ENCODE measurements at regions of chr7 and their contacts with region 1.

Region 1: GRCh38 chr7:65307651-65308299 is 65.9 kb upstream of the ZNF92 start:
- DNase-seq: peak; percentile 68
- H3K4me3 Mint-ChIP-seq: no peak overlapping the region
- H3K27ac Mint-ChIP-seq: no peak overlapping the region
- H3K4me1 Mint-ChIP-seq: no peaks in the 10 kb centered on the region
- H3K27me3 Mint-ChIP-seq: no peaks in the 10 kb centered on the region
- CTCF ChIP-seq: peak; percentile 73

Region 2: GRCh38 chr7:64902806-64903721 is 404.7 kb before region 1 on chr7 and contains the start of gene ZNF273:
- CTCF ChIA-PET with region 1: no interaction called
- POLR2A ChIA-PET with region 1: no interaction called
- intact Hi-C with region 1: no loop called
- DNase-seq: peak; percentile 92
- H3K4me3 Mint-ChIP-seq: peak within 1 kb of the TSS; percentile 95
- H3K27ac Mint-ChIP-seq: peak within 1 kb of the TSS; percentile 95
- H3K4me1 Mint-ChIP-seq: peaks cover 26% of the 10 kb centered on the region
- H3K27me3 Mint-ChIP-seq: no peaks in the 10 kb centered on the region
- CTCF ChIP-seq: no peak
- total RNA-seq, gene ZNF273: 2.2 and 2.5 TPM in 2 replicates

Region 3: GRCh38 chr7:65216459-65216858 is 91.3 kb before region 1 on chr7:
- CTCF ChIA-PET with region 1: interaction called, 41 read pairs
- POLR2A ChIA-PET with region 1: interaction called, 3 read pairs
- intact Hi-C with region 1: loop called (anchors 1 kb)
- DNase-seq: peak; percentile 75
- H3K4me3 Mint-ChIP-seq: peak overlapping the region; percentile 60
- H3K27ac Mint-ChIP-seq: no peak overlapping the region
- H3K4me1 Mint-ChIP-seq: no peaks in the 10 kb centered on the region
- H3K27me3 Mint-ChIP-seq: no peaks in the 10 kb centered on the region
- CTCF ChIP-seq: peak; percentile 83

Region 4: GRCh38 chr7:65276822-65277221 is 31.0 kb before region 1 on chr7:
- CTCF ChIA-PET with region 1: interaction called, 17 read pairs
- POLR2A ChIA-PET with region 1: no interaction called
- intact Hi-C with region 1: no loop called
- DNase-seq: no peak
- H3K4me3 Mint-ChIP-seq: no peak overlapping the region
- H3K27ac Mint-ChIP-seq: no peak overlapping the region
- H3K4me1 Mint-ChIP-seq: no peaks in the 10 kb centered on the region
- H3K27me3 Mint-ChIP-seq: no peaks in the 10 kb centered on the region
- CTCF ChIP-seq: no peak

Region 5: DNA sequence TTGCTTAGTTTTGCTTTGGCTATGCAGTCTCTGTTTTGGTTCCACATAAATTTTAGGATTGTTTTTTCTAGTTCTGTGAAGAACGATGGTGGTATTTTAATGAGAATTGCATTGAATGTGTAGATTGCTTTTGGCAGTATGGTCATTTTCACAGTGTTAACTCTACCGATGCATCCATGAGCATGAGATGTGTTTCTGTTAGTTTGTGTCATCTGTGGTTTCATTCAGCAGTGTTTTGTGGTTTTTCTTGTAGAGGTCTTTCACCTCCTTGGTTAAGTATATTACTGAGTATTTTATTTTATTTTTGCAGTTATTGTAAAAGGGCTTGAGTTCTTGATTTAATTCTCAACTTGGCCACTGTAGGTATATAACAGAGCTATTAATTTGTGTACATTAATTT is 12.4 kb before region 1 on chr7:
- CTCF ChIA-PET with region 1: interaction called, 57 read pairs
- POLR2A ChIA-PET with region 1: interaction called, 3 read pairs
- intact Hi-C with region 1: no loop called
- DNase-seq: no peak
- H3K4me3 Mint-ChIP-seq: no peak overlapping the region
- H3K27ac Mint-ChIP-seq: no peak overlapping the region
- H3K4me1 Mint-ChIP-seq: no peaks in the 10 kb centered on the region
- H3K27me3 Mint-ChIP-seq: no peaks in the 10 kb centered on the region
- CTCF ChIP-seq: no peak

Region 6: DNA sequence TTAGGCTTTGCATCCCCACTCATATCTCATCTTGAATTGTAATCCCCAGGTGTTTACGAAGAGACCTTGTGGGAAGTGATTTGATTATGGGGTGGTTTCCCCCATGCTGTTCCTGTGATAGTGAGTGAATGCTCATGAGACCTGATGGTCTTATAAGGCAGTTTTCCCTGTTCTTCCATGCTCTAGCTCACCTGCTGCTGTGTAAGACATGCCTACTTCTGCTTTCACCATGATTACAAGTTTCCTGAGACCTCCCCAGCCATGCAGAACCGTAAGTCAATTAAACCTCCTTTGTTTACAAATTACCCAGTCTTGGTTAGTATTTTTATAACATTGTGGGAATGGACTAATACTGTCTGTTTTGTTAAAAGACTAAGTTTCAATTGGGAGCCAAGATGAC is 30.6 kb after region 1 on chr7:
- CTCF ChIA-PET with region 1: interaction called, 10 read pairs
- POLR2A ChIA-PET with region 1: no interaction called
- intact Hi-C with region 1: no loop called
- DNase-seq: no peak
- H3K4me3 Mint-ChIP-seq: no peak overlapping the region
- H3K27ac Mint-ChIP-seq: no peak overlapping the region
- H3K4me1 Mint-ChIP-seq: no peaks in the 10 kb centered on the region
- H3K27me3 Mint-ChIP-seq: no peaks in the 10 kb centered on the region
- CTCF ChIP-seq: no peak

Region 7: GRCh38 chr7:65475734-65476319 is 168.1 kb after region 1 on chr7:
- CTCF ChIA-PET with region 1: no interaction called
- POLR2A ChIA-PET with region 1: no interaction called
- intact Hi-C with region 1: no loop called
- DNase-seq: no peak
- H3K4me3 Mint-ChIP-seq: no peak overlapping the region
- H3K27ac Mint-ChIP-seq: no peak overlapping the region
- H3K4me1 Mint-ChIP-seq: peaks cover 6% of the 10 kb centered on the region
- H3K27me3 Mint-ChIP-seq: no peaks in the 10 kb centered on the region
- CTCF ChIP-seq: no peak